Heart left ventricle (tissue), 16 donors: ENCODE measurements at regions of chr6 and their contacts with region 1.

Region 1: GRCh38 chr6:43769526-43770416 is at the start of gene VEGFA:
- DNase-seq: peak; percentile 91 to 95 (median 93)
- ATAC-seq: peak; percentile 71 to 80 (median 76)
- H3K4me3 ChIP-seq: peak within 1 kb of the TSS; percentile 64 to 99 (median 92)
- H3K27ac ChIP-seq: peak within 1 kb of the TSS; percentile 89 to 99 (median 97)
- H3K4me1 ChIP-seq: peaks cover 6 to 42% (median 33%) of the 10 kb centered on the region in 12 donors
- H3K27me3 ChIP-seq: no peaks in the 10 kb centered on the region
- CTCF ChIP-seq: peak; percentile 93 to 99 (median 98)
- POLR2A ChIP-seq: peak; percentile 94 to 98
- total RNA-seq, gene VEGFA: 83.0 to 238 (median 171) TPM

Region 2: DNA sequence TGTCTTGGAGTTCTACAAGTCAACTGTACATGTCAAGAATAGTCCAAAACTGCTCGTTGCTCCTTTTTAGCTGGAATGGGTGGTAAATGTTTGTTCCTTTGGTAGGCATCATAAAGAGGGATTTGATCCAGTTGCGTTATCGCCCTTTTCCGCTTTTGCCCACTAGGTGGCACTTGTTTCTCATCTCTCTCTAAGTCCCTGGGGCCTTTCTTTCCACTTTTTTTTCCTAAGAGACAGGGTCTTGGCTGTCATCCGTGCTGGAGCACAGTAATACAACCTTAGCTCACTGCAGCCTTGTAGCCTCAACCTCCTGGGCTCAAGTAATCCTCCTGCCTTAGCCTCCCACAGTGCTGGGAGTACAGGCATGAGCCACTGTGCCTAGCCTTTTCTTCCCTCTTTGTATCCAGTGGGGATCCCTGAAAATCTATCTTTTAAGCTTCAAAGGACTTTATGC is 161.4 kb before region 1 on chr6:
- intact Hi-C with region 1: loop called in 1 of 10 experiments (anchors 5 kb)
- DNase-seq: peak in 3 of 5 donors; percentile 40 to 66 (median 63)
- ATAC-seq: peak; percentile 51 to 56 (median 54)
- H3K4me3 ChIP-seq: no peak overlapping the region
- H3K27ac ChIP-seq: no peak overlapping the region
- H3K4me1 ChIP-seq: peaks cover 0 to 13% (median 0%) of the 10 kb centered on the region in 12 donors
- H3K27me3 ChIP-seq: no peaks in the 10 kb centered on the region
- CTCF ChIP-seq: peak; percentile 66 to 90 (median 78)
- POLR2A ChIP-seq: no peak

Region 3: DNA sequence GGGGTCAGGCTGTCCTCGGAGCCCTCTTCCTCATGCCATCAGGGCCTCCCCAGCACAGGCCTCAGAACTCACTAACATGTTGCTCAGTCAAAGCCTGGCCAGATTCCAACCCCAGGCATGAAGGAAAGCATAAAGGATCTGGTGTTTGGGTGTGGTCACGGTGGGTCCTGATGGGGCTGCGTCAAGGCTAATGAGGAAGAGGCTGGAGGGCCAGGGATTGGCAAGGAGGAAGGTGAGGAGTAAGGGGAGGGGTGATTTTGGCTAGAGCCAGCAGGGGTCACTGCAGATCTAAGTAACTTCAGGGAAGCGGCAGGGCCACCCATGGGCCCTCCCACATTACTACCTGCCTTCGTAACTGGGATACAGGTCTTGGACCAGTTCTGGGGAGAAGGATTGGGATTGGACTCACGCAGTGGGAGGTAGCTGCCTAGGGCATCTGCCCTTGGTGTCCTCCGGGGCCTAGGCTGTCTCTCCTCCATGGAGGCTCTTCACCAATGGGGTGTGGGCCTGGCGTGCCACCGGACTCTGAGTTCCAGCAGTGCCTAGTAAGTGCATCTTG is 46.0 kb before region 1 on chr6:
- intact Hi-C with region 1: loop called in 4 of 10 experiments (anchors 2 to 5 kb)
- DNase-seq: peak; percentile 60 to 72 (median 66)
- ATAC-seq: peak; percentile 66 to 88 (median 81)
- H3K4me3 ChIP-seq: no peak overlapping the region
- H3K27ac ChIP-seq: no peak overlapping the region
- H3K4me1 ChIP-seq: peaks cover 3 to 21% (median 6%) of the 10 kb centered on the region in 12 donors
- H3K27me3 ChIP-seq: no peaks in the 10 kb centered on the region
- CTCF ChIP-seq: peak; percentile 46 to 72 (median 58)
- POLR2A ChIP-seq: no peak

Region 4: DNA sequence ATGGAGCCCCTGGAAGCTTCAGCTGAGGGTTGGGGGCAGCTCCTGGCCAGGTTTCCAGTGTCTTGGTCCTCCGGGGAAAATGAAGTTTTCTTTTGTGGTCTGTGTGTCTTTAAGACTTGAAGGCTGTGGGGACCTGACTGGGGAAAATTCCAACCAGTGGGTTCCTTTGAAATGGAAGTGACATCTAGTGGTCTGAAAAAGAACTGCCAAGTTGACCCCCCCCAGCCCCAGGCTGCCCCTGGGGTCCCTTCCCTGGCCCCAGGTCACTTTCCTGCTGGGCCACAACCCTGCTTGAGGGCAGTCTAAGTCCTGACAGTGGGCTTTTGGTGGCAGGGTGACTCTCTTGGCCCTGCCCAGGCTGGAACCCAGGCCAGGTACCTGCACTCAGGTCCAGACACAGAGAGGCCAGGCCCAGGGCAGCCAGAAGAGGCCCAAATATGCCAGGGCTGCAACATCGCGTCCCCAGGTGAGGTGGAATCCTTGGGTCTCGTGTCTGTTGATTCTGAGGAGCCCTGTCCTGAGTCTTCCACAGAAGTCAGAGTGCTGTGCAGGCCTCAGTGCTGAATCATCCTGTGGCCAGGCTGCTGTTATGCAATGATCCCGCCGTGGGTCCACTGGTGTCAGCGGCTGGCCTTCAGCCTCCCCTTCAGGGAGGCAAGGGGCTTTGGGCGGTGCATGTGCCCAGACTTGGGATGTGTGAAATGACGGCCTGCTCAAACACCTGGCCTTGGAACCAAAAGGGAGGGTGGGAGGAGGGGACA is 68.7 kb after region 1 on chr6:
- intact Hi-C with region 1: loop called in 4 of 10 experiments (anchors 1 to 5 kb)
- DNase-seq: peak; percentile 17 to 76 (median 61)
- ATAC-seq: peak; percentile 39 to 87 (median 80)
- H3K4me3 ChIP-seq: no peak overlapping the region
- H3K27ac ChIP-seq: peak overlapping the region in 5 of 12 donors; percentile 14 to 63 (median 36)
- H3K4me1 ChIP-seq: peaks cover 0 to 19% (median 2%) of the 10 kb centered on the region in 12 donors
- H3K27me3 ChIP-seq: no peaks in the 10 kb centered on the region
- CTCF ChIP-seq: peak in 11 of 12 donors; percentile 36 to 65 (median 47)
- POLR2A ChIP-seq: no peak

Region 5: DNA sequence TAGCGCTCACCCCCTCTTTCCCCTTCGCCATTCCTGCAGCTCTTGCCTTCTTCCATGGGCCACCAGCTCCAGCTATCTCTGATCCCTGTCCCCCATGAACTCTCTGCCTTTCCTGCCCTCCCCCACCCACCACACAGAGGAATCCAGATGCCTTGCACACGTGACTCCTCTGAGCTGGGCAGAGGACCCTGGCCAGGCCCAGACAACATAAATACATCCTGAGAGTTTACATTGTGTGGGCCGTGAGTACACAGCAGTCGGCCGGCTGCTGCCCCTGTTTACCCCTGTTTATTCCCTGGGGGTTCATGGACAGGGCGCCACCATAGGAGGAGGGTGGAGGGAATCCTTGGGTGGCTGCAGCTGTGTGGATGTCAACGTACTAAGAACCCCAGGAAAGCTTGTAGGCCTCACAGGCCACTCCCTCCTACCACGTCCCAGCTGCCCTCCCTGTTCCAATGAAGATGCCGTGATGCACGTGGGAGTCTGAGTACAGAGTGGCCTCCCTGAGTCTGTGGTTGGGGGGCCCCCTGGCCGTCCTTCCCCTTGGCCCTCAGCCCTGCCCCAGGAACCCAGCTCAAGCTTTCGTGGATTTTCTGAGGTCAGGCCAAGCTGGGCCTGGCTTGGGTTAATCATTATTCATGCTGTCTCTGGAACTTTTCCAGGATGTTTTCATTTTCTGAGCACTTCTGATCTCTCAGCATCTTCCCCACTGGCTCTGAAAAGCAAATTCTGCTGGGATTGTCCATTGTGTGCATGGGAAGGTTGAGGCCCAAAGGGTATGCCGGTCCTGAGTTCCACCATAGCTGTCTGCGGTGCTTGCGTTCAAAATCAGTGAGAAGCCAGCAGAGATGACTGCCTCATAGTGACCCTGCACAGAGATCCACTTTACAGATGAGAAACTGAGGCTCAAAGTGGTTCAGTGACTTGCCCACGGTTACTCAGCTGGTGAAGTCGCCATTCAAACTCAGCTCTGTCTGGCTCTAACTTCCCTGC is 221.2 kb after region 1 on chr6:
- intact Hi-C with region 1: loop called in 4 of 10 experiments (anchors 5 kb)
- DNase-seq: peak in 1 of 5 donors; percentile 61
- ATAC-seq: peak in 2 of 4 donors; percentile 14 to 19
- H3K4me3 ChIP-seq: no peak overlapping the region
- H3K27ac ChIP-seq: peak overlapping the region; percentile 73 to 98 (median 86)
- H3K4me1 ChIP-seq: peaks cover 0 to 55% (median 20%) of the 10 kb centered on the region in 12 donors
- H3K27me3 ChIP-seq: no peaks in the 10 kb centered on the region
- CTCF ChIP-seq: no peak
- POLR2A ChIP-seq: no peak

Region 6: DNA sequence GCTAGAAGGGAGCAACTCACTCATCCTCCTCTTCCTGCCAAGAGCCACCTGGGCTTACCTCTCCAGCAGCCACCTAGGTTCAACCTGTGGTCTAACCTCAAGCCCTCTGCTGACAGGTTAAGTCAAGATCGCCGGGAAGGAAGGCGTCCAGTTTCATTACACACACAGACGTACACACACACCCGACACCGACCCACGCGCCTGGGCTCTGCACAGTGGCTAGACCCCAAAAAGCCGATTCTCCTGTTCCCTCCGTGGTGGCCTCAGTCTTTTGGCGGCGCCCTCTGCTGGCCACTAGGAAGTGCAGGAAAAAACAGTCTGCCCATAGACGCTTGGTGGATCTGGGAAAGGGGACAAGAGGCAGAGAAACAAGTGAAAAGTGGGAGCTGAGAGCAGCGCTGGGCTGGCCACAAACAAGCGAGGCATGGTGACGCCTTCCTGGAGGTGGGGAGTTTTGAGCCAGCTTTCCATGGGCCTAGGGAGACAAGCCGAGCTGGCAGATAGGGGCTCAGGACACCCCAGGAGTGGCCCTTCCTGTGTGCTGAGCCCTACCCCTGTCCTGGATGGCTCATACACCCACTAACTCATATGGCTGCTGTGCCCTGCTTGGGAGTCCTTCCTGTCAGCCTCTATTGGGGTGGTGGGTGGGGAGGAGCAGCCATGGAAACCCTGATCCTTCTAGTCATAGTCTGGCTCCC is 304.8 kb after region 1 on chr6:
- intact Hi-C with region 1: loop called (anchors 1 to 2 kb)
- DNase-seq: peak; percentile 64 to 86 (median 78)
- ATAC-seq: peak; percentile 54 to 75 (median 65)
- H3K4me3 ChIP-seq: peak overlapping the region in 8 of 12 donors; percentile 20 to 61 (median 54)
- H3K27ac ChIP-seq: peak overlapping the region in 11 of 12 donors; percentile 61 to 91 (median 85)
- H3K4me1 ChIP-seq: peaks cover 12 to 58% (median 38%) of the 10 kb centered on the region in 12 donors
- H3K27me3 ChIP-seq: peaks cover 0 to 10% (median 0%) of the 10 kb centered on the region in 9 donors
- CTCF ChIP-seq: peak; percentile 82 to 96 (median 90)
- POLR2A ChIP-seq: no peak

Region 7: GRCh38 chr6:44246663-44247337 is 477.0 kb after region 1 on chr6 and contains the start of gene HSP90AB1:
- intact Hi-C with region 1: loop called in 1 of 10 experiments (anchors 10 kb)
- DNase-seq: peak; percentile 94 to 97 (median 95)
- ATAC-seq: peak; percentile 83 to 88 (median 86)
- H3K4me3 ChIP-seq: peak within 1 kb of the TSS; percentile 69 to 98 (median 81)
- H3K27ac ChIP-seq: peak within 1 kb of the TSS; percentile 90 to 100 (median 98)
- H3K4me1 ChIP-seq: peaks cover 0 to 45% (median 37%) of the 10 kb centered on the region in 12 donors
- H3K27me3 ChIP-seq: no peaks in the 10 kb centered on the region
- CTCF ChIP-seq: no peak
- POLR2A ChIP-seq: peak; percentile 81 to 95
- total RNA-seq, gene HSP90AB1: 725 to 1,040 (median 857) TPM

Region 8: GRCh38 chr6:44446628-44447306 is 677.0 kb after region 1 on chr6:
- intact Hi-C with region 1: no loop called
- DNase-seq: no peak
- ATAC-seq: no peak
- H3K4me3 ChIP-seq: no peak overlapping the region
- H3K27ac ChIP-seq: no peak overlapping the region
- H3K4me1 ChIP-seq: peaks cover 0 to 12% (median 3%) of the 10 kb centered on the region in 12 donors
- H3K27me3 ChIP-seq: no peaks in the 10 kb centered on the region
- CTCF ChIP-seq: no peak
- POLR2A ChIP-seq: no peak